ENCODE measurements at regions of chr5 and their contacts with region 1.

Region 1: DNA sequence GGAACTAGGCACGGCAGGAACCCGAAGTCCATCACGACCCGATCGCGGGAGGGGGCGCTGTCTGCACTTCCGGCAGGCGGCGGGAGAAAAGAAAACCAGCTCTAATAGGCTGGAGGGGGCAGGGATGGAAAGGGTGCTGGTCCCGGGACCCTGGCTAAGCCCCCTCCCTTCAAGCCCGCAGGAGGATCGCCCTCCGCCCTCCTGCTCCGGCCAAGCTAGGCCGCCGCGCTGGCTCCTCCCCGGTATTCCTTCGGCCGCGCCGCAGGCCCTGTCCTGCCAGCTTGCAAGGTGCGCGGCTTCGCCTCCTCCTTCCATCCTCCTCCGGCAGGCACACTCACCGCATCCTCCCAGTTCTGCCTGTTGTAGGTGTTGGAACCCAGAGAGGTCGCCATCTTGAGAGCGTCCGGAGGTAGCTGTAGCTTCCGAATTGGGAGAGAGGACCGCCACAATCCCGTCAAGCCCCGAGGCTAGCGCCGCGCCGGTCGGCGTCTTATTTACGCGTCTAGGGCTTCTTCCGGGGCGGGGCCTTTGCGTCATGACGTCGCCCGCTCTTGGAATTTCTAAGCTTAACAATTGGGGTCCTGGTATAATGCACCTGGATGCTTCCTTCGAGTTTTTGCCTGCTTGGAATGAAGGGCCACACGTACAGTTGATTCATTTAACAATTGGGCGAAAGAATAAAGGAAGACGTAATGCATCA is at the start of gene RBM22:
- DNase-seq: peak; percentile 90
- CTCF ChIP-seq: peak; percentile 71

Region 2: DNA sequence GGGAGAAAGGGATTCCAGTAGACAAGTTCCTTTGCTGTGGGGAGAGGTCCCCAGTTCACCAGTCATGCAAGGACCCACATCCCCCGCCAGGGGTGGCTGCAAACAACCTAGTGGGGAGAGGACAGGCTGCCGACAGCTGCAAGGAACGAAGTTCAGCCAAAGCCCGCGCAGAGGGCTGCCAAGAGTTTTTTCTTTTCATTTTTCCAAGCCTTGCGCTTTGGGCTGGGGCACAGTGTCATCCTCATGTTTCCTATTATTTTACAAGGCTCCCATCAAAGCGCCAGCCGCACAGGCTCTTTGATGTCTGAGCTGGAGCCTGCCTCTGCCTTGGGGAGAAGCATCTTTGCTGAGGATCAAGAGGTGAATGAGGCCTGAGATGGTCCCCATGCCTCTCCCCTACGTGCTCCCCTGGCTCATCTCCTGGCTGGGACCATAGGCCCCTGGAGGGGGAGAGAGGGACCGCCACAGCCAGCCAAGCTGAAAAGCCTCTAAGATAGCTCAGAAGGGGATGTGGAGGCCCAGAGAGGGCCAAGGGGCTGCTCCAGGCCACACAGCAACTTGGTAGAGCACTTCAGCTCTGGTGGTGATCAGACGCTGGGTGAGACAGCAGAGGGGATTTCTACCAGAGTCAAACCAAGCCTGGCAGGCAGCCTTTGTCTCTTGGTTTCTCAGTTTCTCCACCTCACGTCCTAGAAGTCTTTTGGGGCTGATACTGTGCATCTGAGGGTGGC is 110.7 kb before region 1 on chr5:
- CTCF ChIA-PET with region 1: no interaction called
- POLR2A ChIA-PET with region 1: no interaction called
- DNase-seq: no peak
- CTCF ChIP-seq: no peak

Region 3: GRCh38 chr5:150689120-150689519 is 11.6 kb before region 1 on chr5:
- CTCF ChIA-PET with region 1: interaction called, 20 read pairs
- POLR2A ChIA-PET with region 1: interaction called, 4 read pairs
- DNase-seq: no peak
- CTCF ChIP-seq: no peak

Region 4: DNA sequence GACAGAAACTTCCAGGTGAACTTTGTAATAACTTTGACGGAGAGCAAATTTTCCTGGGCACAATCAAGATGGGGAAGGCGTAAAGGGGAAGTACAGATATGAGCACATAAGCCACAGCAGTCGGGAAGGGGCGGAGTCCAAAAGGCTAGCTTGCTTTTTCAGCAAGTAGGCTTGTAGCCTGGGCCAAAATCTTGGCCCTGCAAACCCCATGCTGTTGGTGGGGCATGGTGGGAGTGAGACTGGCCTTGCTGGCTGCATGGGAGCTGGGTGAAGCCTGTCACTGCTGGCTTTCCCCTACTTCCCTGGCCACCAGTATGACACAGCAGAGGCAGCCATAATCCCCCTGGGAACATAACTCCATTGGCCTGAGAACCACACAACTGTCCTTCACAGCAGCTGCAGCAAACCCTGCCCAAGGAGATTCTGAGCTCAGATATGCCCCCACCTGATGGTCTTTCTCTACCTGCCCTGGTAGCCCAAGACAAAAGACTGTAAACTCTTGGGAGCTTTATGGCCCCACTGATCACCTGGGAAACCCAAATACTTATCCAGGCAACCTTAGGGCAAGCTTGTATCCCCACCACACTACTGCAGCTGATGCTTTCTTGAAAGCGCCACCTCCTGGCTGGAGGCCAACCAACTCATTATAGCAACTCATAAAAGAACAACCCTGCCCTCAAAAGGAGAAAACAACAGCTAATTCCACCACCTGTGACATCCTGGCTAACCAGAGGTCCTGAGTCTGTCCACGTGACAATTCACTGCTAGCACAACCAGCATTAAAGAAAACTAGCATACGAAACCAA is 34.0 kb after region 1 on chr5:
- CTCF ChIA-PET with region 1: interaction called, 10 read pairs
- POLR2A ChIA-PET with region 1: interaction called, 3 read pairs
- DNase-seq: peak; percentile 44
- CTCF ChIP-seq: peak; percentile 13

Region 5: GRCh38 chr5:150758531-150759333 is 58.0 kb after region 1 on chr5 and contains the start of gene DCTN4:
- CTCF ChIA-PET with region 1: interaction called, 16 read pairs
- POLR2A ChIA-PET with region 1: interaction called, 10 read pairs
- DNase-seq: peak; percentile 92
- CTCF ChIP-seq: no peak

Region 6: DNA sequence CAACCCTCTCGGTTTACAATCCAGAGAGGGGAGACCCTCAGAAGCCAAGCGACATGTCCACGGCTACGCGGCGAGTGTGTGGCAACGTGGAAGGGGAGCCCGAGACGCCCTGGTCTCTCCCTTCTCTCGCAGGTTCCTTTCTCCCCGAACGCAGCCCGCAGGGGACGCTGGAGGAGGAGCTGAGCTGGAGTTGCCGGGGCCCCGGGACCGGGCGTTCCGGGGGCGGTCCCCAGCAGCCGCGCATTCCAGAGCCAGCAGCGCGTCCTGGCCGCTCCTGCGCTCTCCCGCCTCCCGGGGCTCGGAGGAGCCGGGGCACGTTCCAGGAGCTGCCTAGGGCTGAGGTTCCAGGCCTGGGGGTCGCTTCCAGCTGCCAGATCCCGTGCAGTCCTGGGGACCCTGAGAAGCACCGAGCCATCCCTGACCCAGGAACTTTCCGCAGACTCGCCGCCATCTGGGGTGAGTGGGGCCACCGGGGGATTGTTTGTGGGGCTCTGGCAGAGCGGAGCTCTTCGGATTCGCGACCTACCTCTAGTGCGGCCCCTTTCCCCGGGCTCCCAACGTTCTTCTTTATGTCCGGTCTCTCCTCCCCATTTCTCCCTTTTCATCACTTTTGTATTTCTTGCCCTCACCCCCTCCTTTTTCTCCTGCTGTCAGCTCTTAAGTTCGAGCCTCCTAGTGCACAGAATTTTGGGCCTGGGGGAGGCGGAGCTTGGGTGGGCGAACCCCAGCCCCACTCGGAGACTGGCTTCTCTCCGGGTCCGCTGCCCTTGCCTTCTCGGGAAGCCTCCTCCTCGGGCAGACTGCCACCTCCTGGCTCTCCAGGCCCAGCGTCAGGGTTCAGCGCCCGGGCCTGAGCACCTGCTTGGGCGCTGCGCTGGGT is 78.0 kb after region 1 on chr5 and contains the start of gene SMIM3:
- CTCF ChIA-PET with region 1: interaction called, 11 read pairs
- POLR2A ChIA-PET with region 1: interaction called, 4 read pairs
- DNase-seq: peak; percentile 69
- CTCF ChIP-seq: peak; percentile 85